ENCODE measurements at regions of chr17 and their contacts with region 1.

Region 1: DNA sequence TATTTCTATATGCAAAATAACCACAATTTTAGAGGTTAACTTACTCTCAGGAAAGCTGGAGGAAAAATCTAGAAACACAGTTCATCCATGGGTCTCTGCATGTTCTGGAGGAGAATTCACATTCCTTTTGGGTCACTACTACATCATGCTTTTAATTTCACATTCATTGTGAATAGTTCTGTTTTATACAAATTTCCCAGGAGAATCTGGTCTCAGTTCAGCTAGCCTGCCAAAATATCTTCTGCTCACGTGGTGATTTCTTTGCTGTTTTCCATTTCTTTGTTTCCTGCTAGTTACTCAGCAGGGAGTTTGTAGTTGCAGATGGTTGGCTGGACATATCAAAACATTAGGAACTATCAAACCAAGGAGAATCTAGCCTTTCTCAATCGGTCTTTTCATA is at the start of gene ABCA9:
- DNase-seq: no peak
- H3K4me3 ChIP-seq: peak within 1 kb of the TSS in 26 of 59 donors; percentile 2 to 35 (median 16)
- H3K27ac ChIP-seq: peak within 1 kb of the TSS in 51 of 59 donors; percentile 1 to 72 (median 39)
- H3K27me3 ChIP-seq: no peaks in the 10 kb centered on the region
- CTCF ChIP-seq: no peak
- total RNA-seq, gene ABCA9: 6.9 to 33.3 (median 16.5) TPM

Region 2: GRCh38 chr17:69235338-69235930 is 174.6 kb after region 1 on chr17:
- intact Hi-C with region 1: loop called in 1 of 2 experiments (anchors 10 kb)
- DNase-seq: peak; percentile 32 to 84 (median 72)
- H3K4me3 ChIP-seq: no peak overlapping the region
- H3K27ac ChIP-seq: peak overlapping the region in 20 of 59 donors; percentile 2 to 70 (median 27)
- H3K27me3 ChIP-seq: no peaks in the 10 kb centered on the region
- CTCF ChIP-seq: peak; percentile 75 to 98 (median 88)

Measured in dorsolateral prefrontal cortex (tissue), 120 donors.